ENCODE measurements at regions of chr18 and their contacts with region 1.

Region 1: DNA sequence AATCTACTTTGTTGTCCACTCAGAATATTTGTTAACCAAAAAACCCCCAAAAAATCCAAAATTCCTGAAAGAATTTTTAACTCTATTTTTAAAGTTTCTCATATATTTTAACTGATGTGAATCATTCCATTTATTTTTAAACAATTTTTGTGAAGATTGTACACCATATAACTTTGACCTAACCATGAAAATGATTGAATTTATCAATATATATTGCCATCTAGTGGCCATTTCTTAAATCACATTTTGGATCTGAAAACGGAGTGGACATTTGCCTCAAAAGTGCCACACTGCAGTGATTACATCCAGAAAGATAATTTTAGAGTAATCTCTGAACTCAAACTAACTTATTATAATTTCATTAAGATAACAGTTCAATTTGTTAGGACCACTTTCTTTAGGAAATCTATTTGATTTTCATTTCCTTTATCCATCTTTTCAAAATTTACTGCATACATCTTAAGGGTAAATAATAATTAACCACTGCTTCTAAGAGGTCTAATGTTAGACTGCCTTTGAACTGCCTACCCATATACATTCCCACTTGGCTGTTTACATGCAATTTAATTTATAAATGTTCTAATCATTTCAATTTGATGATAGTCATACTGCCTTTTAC is 71.1 kb downstream of the DSC3 start:
- DNase-seq: no peak
- ATAC-seq: no peak
- H3K4me3 ChIP-seq: no peak overlapping the region
- H3K27ac ChIP-seq: no peak overlapping the region
- H3K4me1 ChIP-seq: no peaks in the 10 kb centered on the region
- H3K27me3 ChIP-seq: no peaks in the 10 kb centered on the region
- CTCF ChIP-seq: peak; percentile 46; the same call in 1 of the 2 replicates

Region 2: DNA sequence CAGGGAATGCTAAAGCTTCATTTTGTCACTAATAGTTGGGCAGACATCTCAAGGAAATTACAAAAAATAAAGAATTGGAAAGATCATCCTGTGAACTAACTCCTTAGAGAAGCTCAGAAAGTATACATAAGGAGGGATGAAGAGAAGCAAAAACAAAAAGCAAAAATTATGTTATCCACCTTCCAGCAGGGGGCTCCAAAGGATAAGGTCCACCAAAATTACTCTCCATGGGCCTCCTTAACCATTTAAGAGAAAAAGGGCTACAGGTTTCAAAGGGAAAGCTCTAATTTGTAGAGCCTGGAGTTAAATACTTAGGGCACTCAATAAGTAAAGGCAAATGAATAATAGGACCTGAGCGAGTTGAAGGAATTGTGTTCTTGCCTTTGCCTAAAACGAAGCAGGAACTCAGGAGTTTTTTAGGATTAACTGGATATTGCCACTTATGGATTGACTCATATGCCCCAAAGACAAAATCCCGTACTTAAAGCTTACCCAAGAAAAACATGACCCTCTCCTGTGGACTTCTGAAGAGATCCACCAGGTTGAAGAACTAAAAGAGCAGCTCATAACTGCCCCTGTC is 1096.8 kb before region 1 on chr18:
- CTCF ChIA-PET with region 1: no interaction called
- POLR2A ChIA-PET with region 1: no interaction called
- in situ Hi-C with region 1: no loop called
- intact Hi-C with region 1: loop called (anchors 10 kb)
- DNase-seq: peak; percentile 2
- ATAC-seq: no peak
- H3K4me3 ChIP-seq: no peak overlapping the region
- H3K27ac ChIP-seq: no peak overlapping the region
- H3K4me1 ChIP-seq: no peaks in the 10 kb centered on the region
- H3K27me3 ChIP-seq: no peaks in the 10 kb centered on the region
- CTCF ChIP-seq: peak; percentile 41; the same call in 1 of the 2 replicates

Region 3: DNA sequence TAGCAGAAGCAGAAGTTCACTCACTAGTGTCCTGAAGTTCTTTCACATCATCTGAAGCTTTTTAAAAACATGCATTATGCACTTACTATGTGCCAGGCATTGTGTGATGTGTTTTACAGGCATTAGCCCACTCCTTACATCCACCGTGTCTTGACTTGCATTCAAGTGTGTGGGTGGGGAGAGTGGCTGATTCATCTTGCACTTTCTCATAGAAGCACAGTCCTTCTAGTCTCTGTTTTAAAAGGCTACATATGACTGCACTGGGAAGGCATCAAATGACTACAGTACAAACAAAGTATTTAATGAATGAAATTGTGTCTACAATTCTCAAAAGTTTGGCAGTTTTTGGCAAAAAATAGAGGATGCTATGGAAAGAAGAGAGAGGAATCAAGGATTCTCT is 92.7 kb after region 1 on chr18:
- CTCF ChIA-PET with region 1: no interaction called
- POLR2A ChIA-PET with region 1: no interaction called
- in situ Hi-C with region 1: no loop called
- intact Hi-C with region 1: no loop called
- DNase-seq: no peak
- ATAC-seq: no peak
- H3K4me3 ChIP-seq: no peak overlapping the region
- H3K27ac ChIP-seq: no peak overlapping the region
- H3K4me1 ChIP-seq: no peaks in the 10 kb centered on the region
- H3K27me3 ChIP-seq: no peaks in the 10 kb centered on the region
- CTCF ChIP-seq: no peak

Region 4: GRCh38 chr18:31546476-31546875 is 575.0 kb after region 1 on chr18:
- CTCF ChIA-PET with region 1: interaction called, 16 read pairs
- POLR2A ChIA-PET with region 1: no interaction called
- in situ Hi-C with region 1: no loop called
- intact Hi-C with region 1: no loop called
- DNase-seq: no peak
- ATAC-seq: no peak
- H3K4me3 ChIP-seq: no peak overlapping the region
- H3K27ac ChIP-seq: no peak overlapping the region
- H3K4me1 ChIP-seq: no peaks in the 10 kb centered on the region
- H3K27me3 ChIP-seq: no peaks in the 10 kb centered on the region
- CTCF ChIP-seq: no peak

Measured in Panc1 (cell line).